ENCODE measurements at regions of chr16 and their contacts with region 1.

Region 1: DNA sequence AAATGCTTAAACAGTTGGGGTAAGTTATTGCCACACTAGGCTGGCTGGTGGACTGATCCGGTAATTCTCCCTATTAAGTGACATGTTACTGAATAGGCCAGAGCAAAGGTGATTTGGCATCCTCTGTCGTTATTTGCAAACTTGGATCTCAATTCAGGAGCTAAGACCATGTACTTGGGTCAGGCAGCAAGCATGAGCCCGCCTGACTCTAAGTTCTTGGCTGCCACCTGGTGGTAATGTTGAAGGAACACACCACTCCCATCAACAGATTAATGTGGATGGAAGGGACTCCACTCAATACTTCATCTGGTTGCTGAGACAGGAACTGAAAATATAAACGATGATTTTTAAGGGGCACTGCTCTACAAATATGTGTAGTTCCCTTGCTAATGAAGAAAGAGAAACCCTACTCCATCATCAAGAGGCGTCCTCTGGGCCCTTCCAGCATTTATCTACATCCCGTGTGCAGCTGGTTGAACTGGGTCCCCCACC is 70.8 kb downstream of the EMP2 start:
- DNase-seq: peak; percentile 64
- H3K4me3 ChIP-seq: no peak overlapping the region
- H3K27ac ChIP-seq: no peak overlapping the region
- H3K4me1 ChIP-seq: no peaks in the 10 kb centered on the region
- H3K27me3 ChIP-seq: no peaks in the 10 kb centered on the region
- CTCF ChIP-seq: peak; percentile 78 to 85

Region 2: GRCh38 chr16:9134739-9135138 is 1374.8 kb before region 1 on chr16:
- CTCF ChIA-PET with region 1: no interaction called
- dilution Hi-C with region 1: no loop called
- in situ Hi-C with region 1: no loop called
- intact Hi-C with region 1: loop called (anchors 10 kb)
- DNase-seq: no peak
- H3K4me3 ChIP-seq: no peak overlapping the region
- H3K27ac ChIP-seq: no peak overlapping the region
- H3K4me1 ChIP-seq: peaks cover 3% of the 10 kb centered on the region
- H3K27me3 ChIP-seq: no peaks in the 10 kb centered on the region
- CTCF ChIP-seq: peak; percentile 42 to 70

Region 3: GRCh38 chr16:9258423-9259051 is 1251.0 kb before region 1 on chr16:
- CTCF ChIA-PET with region 1: no interaction called
- dilution Hi-C with region 1: no loop called
- in situ Hi-C with region 1: no loop called
- intact Hi-C with region 1: loop called (anchors 5 kb)
- DNase-seq: peak; percentile 12
- H3K4me3 ChIP-seq: no peak overlapping the region
- H3K27ac ChIP-seq: no peak overlapping the region
- H3K4me1 ChIP-seq: no peaks in the 10 kb centered on the region
- H3K27me3 ChIP-seq: no peaks in the 10 kb centered on the region
- CTCF ChIP-seq: peak; percentile 34 to 45

Region 4: GRCh38 chr16:10256784-10257641 is 252.6 kb before region 1 on chr16:
- CTCF ChIA-PET with region 1: no interaction called
- dilution Hi-C with region 1: no loop called
- in situ Hi-C with region 1: loop called (anchors 5 kb)
- intact Hi-C with region 1: loop called (anchors 1 kb)
- DNase-seq: peak; percentile 27
- H3K4me3 ChIP-seq: no peak overlapping the region
- H3K27ac ChIP-seq: no peak overlapping the region
- H3K4me1 ChIP-seq: peaks cover 6% of the 10 kb centered on the region
- H3K27me3 ChIP-seq: no peaks in the 10 kb centered on the region
- CTCF ChIP-seq: peak; percentile 49 to 83

Region 5: DNA sequence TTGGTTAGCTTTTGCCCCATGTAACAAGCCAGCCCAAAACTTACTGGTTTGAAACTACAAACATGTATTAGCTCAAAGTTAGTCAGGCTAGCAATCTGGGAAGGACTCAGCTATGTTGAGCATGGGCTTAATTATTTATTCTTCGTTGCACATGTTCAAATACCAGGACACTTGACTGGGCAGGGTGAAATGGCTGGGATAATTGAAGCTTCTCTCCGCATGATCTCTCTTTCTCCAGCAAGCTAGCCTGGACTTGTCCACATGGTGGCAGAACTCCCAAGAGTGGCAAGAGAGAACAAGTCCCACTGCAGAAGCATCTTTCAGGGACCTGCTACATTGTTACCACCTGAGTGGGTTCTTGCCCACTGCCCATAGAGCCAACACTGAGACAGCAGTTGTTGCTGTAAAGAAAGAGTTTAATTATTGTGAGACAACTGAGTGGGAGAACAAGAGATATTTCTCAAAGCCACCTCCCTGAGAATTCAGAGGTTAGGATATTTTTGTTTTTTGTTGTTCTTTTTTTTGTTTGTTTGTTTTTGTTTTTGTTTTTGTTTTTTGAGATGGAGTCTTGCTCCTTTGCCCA is 140.5 kb before region 1 on chr16:
- CTCF ChIA-PET with region 1: interaction called, 4 read pairs
- dilution Hi-C with region 1: no loop called
- in situ Hi-C with region 1: no loop called
- intact Hi-C with region 1: loop called (anchors 5 kb)
- DNase-seq: peak; percentile 63
- H3K4me3 ChIP-seq: no peak overlapping the region
- H3K27ac ChIP-seq: no peak overlapping the region
- H3K4me1 ChIP-seq: peaks cover 10% of the 10 kb centered on the region
- H3K27me3 ChIP-seq: no peaks in the 10 kb centered on the region
- CTCF ChIP-seq: peak; percentile 21 to 51

Region 6: GRCh38 chr16:10737068-10737625 is 227.6 kb after region 1 on chr16:
- CTCF ChIA-PET with region 1: no interaction called
- dilution Hi-C with region 1: no loop called
- in situ Hi-C with region 1: loop called in 1 of 2 experiments (anchors 5 kb)
- intact Hi-C with region 1: loop called (anchors 1 kb)
- DNase-seq: peak; percentile 50
- H3K4me3 ChIP-seq: no peak overlapping the region
- H3K27ac ChIP-seq: no peak overlapping the region
- H3K4me1 ChIP-seq: peaks cover 8% of the 10 kb centered on the region
- H3K27me3 ChIP-seq: no peaks in the 10 kb centered on the region
- CTCF ChIP-seq: peak; percentile 85 to 90

Region 7: GRCh38 chr16:10918294-10919002 is 408.9 kb after region 1 on chr16:
- CTCF ChIA-PET with region 1: interaction called, 4 read pairs
- dilution Hi-C with region 1: no loop called
- in situ Hi-C with region 1: loop called in 1 of 2 experiments (anchors 10 kb)
- intact Hi-C with region 1: loop called (anchors 1 kb)
- DNase-seq: peak; percentile 77
- H3K4me3 ChIP-seq: no peak overlapping the region
- H3K27ac ChIP-seq: no peak overlapping the region
- H3K4me1 ChIP-seq: peaks cover 7% of the 10 kb centered on the region
- H3K27me3 ChIP-seq: no peaks in the 10 kb centered on the region
- CTCF ChIP-seq: peak; percentile 98 to 99

Measured in mammary epithelial cell (primary cell).